H1 (cell line): ENCODE measurements at regions of chr17 and their contacts with region 1.

Region 1: DNA sequence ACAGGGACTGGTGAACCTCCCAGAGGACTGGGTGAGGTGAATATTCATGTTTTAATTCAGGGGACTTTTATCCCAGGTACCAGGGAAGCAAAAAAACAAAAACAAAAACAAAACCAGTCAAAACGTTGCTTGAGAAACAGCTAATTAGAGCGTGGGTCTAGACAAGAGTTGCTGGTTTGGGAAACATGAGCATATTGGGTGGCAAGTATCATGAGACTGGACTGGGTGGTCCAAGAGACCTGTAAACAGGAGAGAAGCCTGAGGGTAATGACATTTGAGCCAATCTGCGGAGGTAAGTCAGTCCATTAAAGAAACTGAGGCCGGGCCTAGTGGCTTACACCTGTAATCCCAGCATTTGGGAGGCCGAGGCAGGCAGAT is 11.5 kb upstream of the BPTF start:
- DNase-seq: no peak
- H3K4me3 ChIP-seq: no peak overlapping the region
- H3K27ac ChIP-seq: no peak overlapping the region
- H3K4me1 ChIP-seq: no peaks in the 10 kb centered on the region
- H3K27me3 ChIP-seq: no peaks in the 10 kb centered on the region
- CTCF ChIP-seq: no peak
- EP300 ChIP-seq: no peak
- POLR2A ChIP-seq: no peak
- RAD21 ChIP-seq: no peak

Region 2: DNA sequence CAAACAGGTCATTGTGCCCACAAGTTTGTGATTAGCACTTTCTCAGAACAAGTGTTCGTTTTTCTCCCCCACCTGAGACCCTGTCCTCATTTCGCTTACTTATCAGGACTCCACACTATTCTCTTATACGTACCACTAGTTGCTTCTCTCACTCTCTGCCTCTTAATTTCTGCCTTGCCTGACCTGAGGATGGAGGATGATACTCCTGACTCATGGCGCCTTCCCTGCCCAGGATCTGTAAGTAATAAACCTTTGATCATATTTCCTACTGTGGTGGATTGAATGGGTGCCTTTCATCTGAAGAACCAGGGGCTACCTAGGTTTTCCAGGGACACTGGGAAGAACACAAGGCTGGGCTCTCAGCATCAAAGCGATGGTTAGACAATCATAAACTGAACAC is 28.3 kb before region 1 on chr17:
- CTCF ChIA-PET with region 1: no interaction called
- POLR2A ChIA-PET with region 1: no interaction called
- DNase-seq: no peak
- H3K4me3 ChIP-seq: no peak overlapping the region
- H3K27ac ChIP-seq: no peak overlapping the region
- H3K4me1 ChIP-seq: no peaks in the 10 kb centered on the region
- H3K27me3 ChIP-seq: no peaks in the 10 kb centered on the region; a peak in 1 of 7 replicates
- CTCF ChIP-seq: no peak
- EP300 ChIP-seq: no peak
- POLR2A ChIP-seq: no peak
- RAD21 ChIP-seq: no peak

Region 3: DNA sequence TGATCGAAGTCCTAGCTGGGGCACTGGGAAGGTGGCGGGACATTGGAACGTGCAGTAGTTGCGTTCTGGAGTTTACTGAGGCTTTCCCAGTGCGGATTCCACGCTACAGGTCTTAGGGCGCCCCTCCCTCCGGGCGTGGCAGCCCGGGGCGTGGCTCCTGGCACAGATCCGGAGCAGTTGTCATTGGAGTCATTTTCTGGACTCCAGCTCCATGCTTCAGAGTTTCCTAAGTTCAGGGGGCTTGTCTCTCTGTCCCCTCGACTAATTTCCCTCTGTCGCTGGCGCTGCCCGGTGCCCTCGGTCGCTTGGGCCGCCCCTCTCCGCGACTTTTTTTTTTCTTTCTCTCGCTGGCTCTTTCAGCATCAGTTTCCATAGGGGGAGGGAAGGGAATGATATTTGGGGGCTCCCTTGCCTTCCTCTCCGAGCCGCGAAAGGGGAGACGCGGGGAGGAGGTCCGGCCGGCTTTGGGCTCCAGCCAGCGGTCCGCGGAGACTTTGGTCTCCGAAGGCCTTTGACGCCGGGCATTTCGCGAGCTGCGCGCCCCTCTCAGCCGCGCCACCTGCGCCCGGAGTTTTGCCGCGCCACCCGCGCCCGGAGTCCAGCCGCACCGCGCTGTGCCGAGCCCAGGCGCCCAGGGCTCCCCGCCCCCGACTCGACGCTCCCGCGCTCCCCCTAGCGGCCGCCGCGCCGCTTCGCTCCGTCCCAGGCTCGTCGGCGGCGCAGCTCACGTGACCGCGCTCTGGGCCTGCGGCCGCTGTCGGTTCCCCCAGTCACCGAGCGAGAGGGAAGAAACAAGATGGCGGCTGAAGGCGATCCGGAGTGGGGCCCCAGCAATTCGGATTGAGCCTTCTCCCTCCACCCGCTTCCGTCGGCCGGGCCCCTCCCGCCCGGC is 11.2 kb after region 1 on chr17 and contains the start of gene BPTF:
- CTCF ChIA-PET with region 1: interaction called, 6 read pairs
- POLR2A ChIA-PET with region 1: interaction called, 10 read pairs
- DNase-seq: peak; percentile 70 to 93
- H3K4me3 ChIP-seq: peak within 1 kb of the TSS; percentile 65 to 97 (median 90)
- H3K27ac ChIP-seq: peak within 1 kb of the TSS; percentile 98
- H3K4me1 ChIP-seq: peaks cover 0 to 4% (median 0%) of the 10 kb centered on the region in 4 experiments; a peak in 2 of 7 replicates
- H3K27me3 ChIP-seq: no peaks in the 10 kb centered on the region
- CTCF ChIP-seq: peak; percentile 90 to 98 (median 98)
- EP300 ChIP-seq: peak; percentile 32 to 78; a peak in 2 of 3 replicates
- POLR2A ChIP-seq: peak; percentile 82
- RAD21 ChIP-seq: peak; percentile 37 to 68
- total RNA-seq, gene BPTF: 223 and 228 TPM in 2 replicates